ENCODE measurements at regions of chr2 and their contacts with region 1.

Region 1: GRCh38 chr2:7118606-7119503 is 201.6 kb downstream of the RNF144A start:
- DNase-seq: peak; percentile 11
- H3K4me3 ChIP-seq: no peak overlapping the region
- H3K27ac ChIP-seq: no peak overlapping the region
- H3K4me1 ChIP-seq: no peaks in the 10 kb centered on the region
- H3K27me3 ChIP-seq: no peaks in the 10 kb centered on the region
- CTCF ChIP-seq: peak; percentile 66 to 67

Region 2: GRCh38 chr2:7363906-7364305 is 245.1 kb after region 1 on chr2:
- CTCF ChIA-PET with region 1: no interaction called
- dilution Hi-C with region 1: no loop called
- in situ Hi-C with region 1: no loop called
- intact Hi-C with region 1: loop called (anchors 1 kb)
- DNase-seq: no peak
- H3K4me3 ChIP-seq: no peak overlapping the region
- H3K27ac ChIP-seq: no peak overlapping the region
- H3K4me1 ChIP-seq: peaks cover 5% of the 10 kb centered on the region
- H3K27me3 ChIP-seq: no peaks in the 10 kb centered on the region
- CTCF ChIP-seq: peak in 1 of 2 donors; percentile 56